HAP-1 (cell line): ENCODE measurements at regions of chr17 and their contacts with region 1.

Region 1: GRCh38 chr17:46266656-46267544 is 28.0 kb upstream of the LRRC37A start:
- DNase-seq: peak; percentile 64 to 85
- H3K4me3 ChIP-seq: peak overlapping the region; percentile 59
- H3K4me1 ChIP-seq: no peaks in the 10 kb centered on the region
- H3K27me3 ChIP-seq: no peaks in the 10 kb centered on the region

Region 2: DNA sequence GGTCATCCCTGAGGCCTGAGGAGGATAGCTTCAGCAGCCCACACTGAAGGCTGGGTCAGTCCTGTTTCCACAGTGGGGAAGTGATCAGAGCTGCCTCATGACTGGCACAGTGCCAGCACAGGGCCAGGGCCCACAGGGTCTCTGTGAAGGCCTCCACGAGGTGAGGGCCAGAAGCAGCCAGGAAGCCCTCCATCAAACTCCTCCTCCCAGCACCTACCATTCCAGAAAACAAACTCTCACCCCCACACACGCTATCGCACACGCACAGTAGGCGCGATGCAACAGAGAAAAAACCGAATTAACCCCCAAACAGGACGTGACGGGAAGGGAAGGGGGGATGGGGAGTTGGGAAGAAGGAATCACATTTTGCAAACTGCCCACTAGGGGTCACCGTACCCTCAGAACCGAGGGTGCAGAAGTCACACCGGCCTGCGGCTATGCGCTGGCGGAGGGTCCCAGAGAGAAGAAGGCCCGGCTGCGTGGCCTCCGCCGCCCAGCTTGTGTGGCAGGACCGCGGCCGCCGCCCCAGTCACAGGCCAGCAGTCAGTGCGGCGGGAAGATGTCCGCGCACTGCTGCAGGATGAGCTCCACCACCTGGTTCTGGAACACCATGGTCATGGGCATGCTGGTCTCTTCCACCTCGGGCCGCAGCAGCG is 871.9 kb before region 1 on chr17:
- in situ Hi-C with region 1: no loop called
- DNase-seq: peak; percentile 62 to 85
- H3K4me3 ChIP-seq: no peak overlapping the region
- H3K4me1 ChIP-seq: no peaks in the 10 kb centered on the region
- H3K27me3 ChIP-seq: no peaks in the 10 kb centered on the region; the same call in 1 of the 2 replicates

Region 3: GRCh38 chr17:45584092-45585036 is 682.5 kb before region 1 on chr17:
- in situ Hi-C with region 1: loop called (anchors 25 kb)
- DNase-seq: peak; percentile 75 to 77
- H3K4me3 ChIP-seq: peak overlapping the region; percentile 58
- H3K4me1 ChIP-seq: peaks cover 8% of the 10 kb centered on the region
- H3K27me3 ChIP-seq: no peaks in the 10 kb centered on the region